Endothelial cell of umbilical vein (primary cell): ENCODE measurements at regions of chr20 and their contacts with region 1.

Region 1: GRCh38 chr20:19661717-19662636 is 96.1 kb upstream of the RIN2 start:
- DNase-seq: peak; percentile 72
- H3K4me3 ChIP-seq: no peak overlapping the region
- H3K27ac ChIP-seq: no peak overlapping the region
- H3K4me1 ChIP-seq: no peaks in the 10 kb centered on the region
- H3K27me3 ChIP-seq: peaks cover 10 to 22% of the 10 kb centered on the region in 2 experiments
- CTCF ChIP-seq: peak; percentile 85 to 92
- POLR2A ChIP-seq: no peak

Region 2: GRCh38 chr20:18412221-18412901 is 1249.6 kb before region 1 on chr20:
- CTCF ChIA-PET with region 1: interaction called, 7 read pairs
- POLR2A ChIA-PET with region 1: no interaction called
- dilution Hi-C with region 1: no loop called
- intact Hi-C with region 1: loop called (anchors 1 kb)
- DNase-seq: no peak
- H3K4me3 ChIP-seq: no peak overlapping the region
- H3K27ac ChIP-seq: no peak overlapping the region
- H3K4me1 ChIP-seq: no peaks in the 10 kb centered on the region
- H3K27me3 ChIP-seq: no peaks in the 10 kb centered on the region
- CTCF ChIP-seq: no peak
- POLR2A ChIP-seq: no peak

Region 3: GRCh38 chr20:18632196-18633009 is 1029.6 kb before region 1 on chr20:
- CTCF ChIA-PET with region 1: interaction called, 40 read pairs
- POLR2A ChIA-PET with region 1: no interaction called
- dilution Hi-C with region 1: no loop called
- intact Hi-C with region 1: loop called (anchors 1 kb)
- DNase-seq: peak; percentile 49
- H3K4me3 ChIP-seq: no peak overlapping the region
- H3K27ac ChIP-seq: no peak overlapping the region
- H3K4me1 ChIP-seq: no peaks in the 10 kb centered on the region
- H3K27me3 ChIP-seq: no peaks in the 10 kb centered on the region
- CTCF ChIP-seq: peak; percentile 93 to 95
- POLR2A ChIP-seq: no peak

Region 4: DNA sequence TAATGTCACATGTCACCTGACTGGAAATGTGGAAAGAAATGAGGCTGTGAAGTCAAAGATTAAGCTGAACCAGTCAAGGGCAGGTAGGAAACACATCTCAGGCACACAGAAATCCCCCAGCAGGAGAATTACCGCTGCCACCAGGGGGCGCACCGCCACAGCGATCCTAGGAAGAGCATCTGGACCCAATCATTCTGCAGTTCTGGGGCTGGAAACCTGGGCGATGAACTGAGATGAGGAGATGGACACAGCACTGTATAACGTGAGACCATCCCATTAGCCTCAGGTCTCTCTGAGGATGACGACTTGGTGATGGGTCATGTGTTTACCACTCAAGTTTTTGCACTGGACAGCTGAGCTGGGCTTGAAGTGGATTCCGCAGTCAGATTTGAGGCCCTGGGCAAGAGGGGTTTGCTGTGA is 456.0 kb before region 1 on chr20:
- CTCF ChIA-PET with region 1: interaction called, 52 read pairs
- POLR2A ChIA-PET with region 1: no interaction called
- dilution Hi-C with region 1: no loop called
- intact Hi-C with region 1: loop called (anchors 1 kb)
- DNase-seq: peak; percentile 43
- H3K4me3 ChIP-seq: no peak overlapping the region
- H3K27ac ChIP-seq: no peak overlapping the region
- H3K4me1 ChIP-seq: no peaks in the 10 kb centered on the region
- H3K27me3 ChIP-seq: peaks cover under 1 to 2% of the 10 kb centered on the region in 2 experiments
- CTCF ChIP-seq: peak; percentile 84 to 88
- POLR2A ChIP-seq: no peak

Region 5: DNA sequence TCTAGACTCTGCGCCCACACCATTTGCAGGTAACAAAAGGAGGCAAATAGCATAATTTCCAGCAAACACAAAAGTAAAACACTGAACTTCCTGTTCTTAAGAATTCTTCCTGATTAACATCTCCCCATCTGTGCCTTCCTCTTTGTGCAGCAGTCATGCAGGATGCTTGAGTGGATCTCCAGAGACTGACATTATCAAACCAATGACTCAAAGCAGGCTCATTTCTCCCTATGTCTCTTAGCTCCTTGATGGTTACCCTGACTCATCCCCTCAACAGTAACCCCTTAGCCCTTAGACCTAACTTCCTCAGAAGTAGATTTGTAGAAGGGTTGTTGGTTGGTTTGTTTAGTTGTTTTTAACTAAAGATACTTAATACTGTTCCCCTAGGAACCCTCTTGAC is 40.9 kb before region 1 on chr20:
- CTCF ChIA-PET with region 1: interaction called, 13 read pairs
- POLR2A ChIA-PET with region 1: no interaction called
- dilution Hi-C with region 1: no loop called
- intact Hi-C with region 1: no loop called
- DNase-seq: no peak
- H3K4me3 ChIP-seq: no peak overlapping the region
- H3K27ac ChIP-seq: no peak overlapping the region
- H3K4me1 ChIP-seq: no peaks in the 10 kb centered on the region
- H3K27me3 ChIP-seq: peaks cover 0 to 1% of the 10 kb centered on the region in 2 experiments
- CTCF ChIP-seq: no peak
- POLR2A ChIP-seq: no peak

Region 6: DNA sequence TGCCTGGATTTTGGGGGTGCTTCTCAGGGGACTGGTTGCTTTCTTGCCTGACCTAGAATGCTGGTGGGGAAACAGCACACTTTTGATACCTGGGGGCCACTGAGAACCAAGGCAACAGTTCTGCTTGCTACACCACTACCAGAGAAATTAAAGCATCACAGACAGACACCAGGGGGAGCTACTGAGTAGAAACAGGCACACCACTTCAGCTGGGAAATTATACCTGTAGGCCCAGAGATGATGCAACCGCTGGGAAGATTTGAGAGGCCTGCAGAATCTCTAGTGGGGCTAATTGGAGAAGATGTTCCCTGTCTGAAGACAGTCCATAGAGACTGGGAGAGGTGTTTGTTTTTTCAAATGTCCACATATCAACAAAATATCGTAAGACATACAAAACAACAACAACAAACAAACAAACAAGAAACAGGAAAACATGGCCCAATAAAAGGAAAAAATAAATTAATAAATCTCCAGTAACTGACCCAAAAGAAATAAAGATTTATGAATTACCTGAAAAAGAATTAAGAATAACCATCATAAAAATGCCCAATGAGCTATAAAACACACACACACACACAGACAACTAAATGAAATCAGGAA is 33.3 kb before region 1 on chr20:
- CTCF ChIA-PET with region 1: interaction called, 202 read pairs
- POLR2A ChIA-PET with region 1: no interaction called
- dilution Hi-C with region 1: no loop called
- intact Hi-C with region 1: loop called (anchors 1 kb)
- DNase-seq: peak; percentile 66
- H3K4me3 ChIP-seq: no peak overlapping the region
- H3K27ac ChIP-seq: no peak overlapping the region
- H3K4me1 ChIP-seq: no peaks in the 10 kb centered on the region
- H3K27me3 ChIP-seq: peaks cover 0 to 1% of the 10 kb centered on the region in 2 experiments
- CTCF ChIP-seq: peak; percentile 70 to 73
- POLR2A ChIP-seq: no peak

Region 7: GRCh38 chr20:19673575-19673974 is 11.6 kb after region 1 on chr20:
- CTCF ChIA-PET with region 1: interaction called, 25 read pairs
- POLR2A ChIA-PET with region 1: no interaction called
- dilution Hi-C with region 1: no loop called
- intact Hi-C with region 1: no loop called
- DNase-seq: no peak
- H3K4me3 ChIP-seq: no peak overlapping the region
- H3K27ac ChIP-seq: no peak overlapping the region
- H3K4me1 ChIP-seq: no peaks in the 10 kb centered on the region
- H3K27me3 ChIP-seq: peaks cover 12 to 29% of the 10 kb centered on the region in 2 experiments
- CTCF ChIP-seq: no peak
- POLR2A ChIP-seq: no peak